ENCODE measurements at regions of chr7 and their contacts with region 1.

Region 1: DNA sequence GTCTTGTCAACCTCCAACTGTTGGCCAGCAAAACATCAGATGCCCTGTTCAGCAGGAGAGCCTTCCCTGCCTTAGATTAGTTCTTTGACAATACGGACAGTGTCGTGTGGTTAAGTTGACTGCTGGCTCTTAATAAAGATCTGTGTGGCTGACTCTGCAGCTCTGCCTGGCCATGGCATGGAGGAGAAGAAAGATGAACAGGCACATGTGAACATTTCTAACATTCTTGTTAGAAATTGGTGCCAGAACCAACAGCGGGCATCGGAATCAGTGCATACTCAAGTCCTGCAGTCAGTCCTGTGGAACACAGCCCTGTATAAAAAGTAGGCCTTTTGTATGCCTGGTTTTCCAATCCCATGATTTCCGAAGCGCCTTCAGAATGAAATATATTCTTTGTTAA is 455.6 kb downstream of the POM121L12 start:
- DNase-seq: no peak
- H3K4me3 Mint-ChIP-seq: no peak overlapping the region
- H3K27ac Mint-ChIP-seq: no peak overlapping the region
- H3K4me1 Mint-ChIP-seq: no peaks in the 10 kb centered on the region
- H3K27me3 Mint-ChIP-seq: no peaks in the 10 kb centered on the region

Region 2: DNA sequence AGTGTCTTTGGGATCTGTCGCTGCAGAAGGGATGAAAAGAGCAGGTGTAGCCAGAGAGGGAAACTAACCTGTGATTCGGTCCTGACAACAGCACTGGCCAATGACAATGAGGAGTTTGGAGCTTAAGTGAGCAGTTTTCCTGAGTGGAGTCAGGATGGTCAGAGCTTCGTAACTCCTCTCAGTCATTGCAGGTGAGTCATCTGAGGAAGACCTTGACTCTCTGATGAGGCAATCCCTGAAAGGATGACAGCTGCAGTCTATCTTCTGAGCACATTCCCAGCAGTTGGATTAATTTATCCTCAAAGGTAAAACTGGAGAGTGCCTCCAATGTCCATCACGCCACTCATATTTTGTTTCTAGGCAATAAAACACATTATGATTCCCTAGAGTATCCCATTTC is 53.7 kb before region 1 on chr7:
- intact Hi-C with region 1: loop called (anchors 10 kb)
- DNase-seq: no peak
- H3K4me3 Mint-ChIP-seq: no peak overlapping the region
- H3K27ac Mint-ChIP-seq: no peak overlapping the region
- H3K4me1 Mint-ChIP-seq: no peaks in the 10 kb centered on the region
- H3K27me3 Mint-ChIP-seq: no peaks in the 10 kb centered on the region

Measured in activated CD4-positive, alpha-beta T cell treated with anti-CD3 and anti-CD28 coated beads, Interleukin-2, amount 10 ng/mL, durations not matched to agents 24 days and 14 days (primary cell).